ENCODE measurements at regions of chr1 and their contacts with region 1.

Region 1: GRCh38 chr1:220879076-220879508 is at the start of gene HLX:
- DNase-seq: peak; percentile 93
- H3K4me3 ChIP-seq: peak within 1 kb of the TSS; percentile 99
- H3K27ac ChIP-seq: peak within 1 kb of the TSS; percentile 99
- H3K4me1 ChIP-seq: peaks cover 85% of the 10 kb centered on the region
- H3K27me3 ChIP-seq: peaks cover 25% of the 10 kb centered on the region
- CTCF ChIP-seq: no peak
- total RNA-seq, gene HLX: 3.5 TPM

Region 2: GRCh38 chr1:220810179-220810653 is 68.9 kb before region 1 on chr1:
- intact Hi-C with region 1: loop called (anchors 10 kb)
- DNase-seq: peak; percentile 79
- H3K4me3 ChIP-seq: peak overlapping the region; percentile 53
- H3K27ac ChIP-seq: no peak overlapping the region
- H3K4me1 ChIP-seq: peaks cover 16% of the 10 kb centered on the region
- H3K27me3 ChIP-seq: no peaks in the 10 kb centered on the region
- CTCF ChIP-seq: peak; percentile 93